AG04449 (cell line): ENCODE measurements at regions of chr3 and their contacts with region 1.

Region 1: GRCh38 chr3:17841190-17841828 is 98.9 kb upstream of the TBC1D5 start:
- DNase-seq: no peak
- H3K4me3 ChIP-seq: no peak overlapping the region
- CTCF ChIP-seq: peak; percentile 97

Region 2: GRCh38 chr3:17423786-17424536 is 417.3 kb before region 1 on chr3:
- CTCF ChIA-PET with region 1: interaction called, 103 read pairs
- POLR2A ChIA-PET with region 1: no interaction called
- DNase-seq: no peak
- H3K4me3 ChIP-seq: no peak overlapping the region
- CTCF ChIP-seq: no peak

Region 3: GRCh38 chr3:17473761-17474160 is 367.5 kb before region 1 on chr3:
- CTCF ChIA-PET with region 1: interaction called, 20 read pairs
- POLR2A ChIA-PET with region 1: no interaction called
- DNase-seq: no peak
- H3K4me3 ChIP-seq: no peak overlapping the region
- CTCF ChIP-seq: no peak

Region 4: DNA sequence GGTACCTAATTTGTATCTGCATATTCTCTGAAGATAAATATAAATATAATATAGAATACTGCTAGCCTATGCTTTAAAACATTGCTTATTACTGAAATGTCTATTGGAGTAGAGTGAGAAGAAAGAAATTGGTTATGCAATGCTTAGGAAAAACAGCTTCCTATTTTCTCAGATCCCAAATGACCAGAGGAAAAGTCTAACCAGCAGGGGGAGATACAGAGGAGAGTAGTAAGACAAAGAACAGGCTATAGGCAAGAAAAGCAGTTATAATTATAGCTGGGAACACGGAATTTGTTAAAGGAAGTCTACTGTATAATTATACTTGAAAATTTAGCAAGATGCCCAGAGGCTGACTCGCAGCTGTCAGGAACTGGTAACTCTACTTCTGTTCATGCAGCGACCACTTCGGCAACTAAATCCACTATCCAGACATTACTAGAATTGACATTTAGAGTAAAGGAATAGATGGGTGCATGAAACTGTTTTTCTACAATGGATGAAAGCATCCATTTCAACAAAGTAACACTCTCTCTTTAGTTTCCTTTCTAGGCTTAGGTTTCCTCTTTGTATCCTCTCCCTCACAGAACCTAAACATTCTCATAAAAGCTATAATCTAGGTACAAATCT is 196.1 kb before region 1 on chr3:
- CTCF ChIA-PET with region 1: interaction called, 58 read pairs
- POLR2A ChIA-PET with region 1: no interaction called
- DNase-seq: peak; percentile 33
- H3K4me3 ChIP-seq: no peak overlapping the region
- CTCF ChIP-seq: peak; percentile 56

Region 5: DNA sequence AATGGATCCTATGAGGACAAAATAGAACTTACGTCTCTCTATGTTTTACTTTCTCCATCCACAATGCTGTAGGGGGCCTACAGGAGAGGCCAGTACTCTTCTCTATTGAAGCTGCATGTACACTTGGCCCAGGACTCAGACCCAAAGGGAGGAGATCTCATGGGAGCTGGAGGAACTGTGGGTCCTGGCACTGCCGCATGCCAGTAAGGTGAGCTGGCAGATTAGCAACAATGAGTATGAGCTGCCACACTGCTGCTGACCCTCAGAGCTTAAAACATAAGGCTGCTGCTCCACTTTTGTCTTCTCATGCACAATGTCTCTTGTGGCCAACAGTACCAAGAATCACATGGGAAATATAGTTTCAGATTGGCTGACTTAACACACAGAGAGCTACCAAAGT is 41.1 kb before region 1 on chr3:
- CTCF ChIA-PET with region 1: interaction called, 16 read pairs
- POLR2A ChIA-PET with region 1: no interaction called
- DNase-seq: no peak
- H3K4me3 ChIP-seq: no peak overlapping the region
- CTCF ChIP-seq: no peak

Region 6: GRCh38 chr3:17852217-17852616 is 10.9 kb after region 1 on chr3:
- CTCF ChIA-PET with region 1: interaction called, 27 read pairs
- POLR2A ChIA-PET with region 1: no interaction called
- DNase-seq: no peak
- H3K4me3 ChIP-seq: no peak overlapping the region
- CTCF ChIP-seq: no peak